HCT116 (cell line): ENCODE measurements at regions of chr9 and their contacts with region 1.

Region 1: DNA sequence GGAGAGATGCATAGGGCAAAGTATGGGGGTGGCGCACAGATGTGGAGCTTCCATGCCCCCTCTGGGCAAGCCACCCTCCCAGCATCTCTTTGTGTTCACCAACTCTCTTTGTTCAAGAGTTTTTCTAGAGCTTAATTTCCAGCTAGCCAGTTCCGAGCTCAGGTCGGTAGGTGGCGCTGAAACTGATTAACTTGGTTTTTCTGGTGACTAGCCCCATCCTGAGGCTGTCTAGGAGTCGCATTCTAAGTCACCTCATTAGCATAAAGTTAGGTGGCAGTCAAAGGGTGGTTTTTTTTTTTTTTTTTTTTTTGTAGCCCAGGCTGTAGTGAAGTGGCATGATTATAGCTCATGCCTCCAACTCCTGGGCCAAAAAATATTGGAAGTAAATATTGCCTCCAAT is 476.4 kb downstream of the KDM4C start:
- DNase-seq: peak; percentile 41
- ATAC-seq: peak; percentile 95
- H3K4me3 ChIP-seq: no peak overlapping the region
- H3K27ac ChIP-seq: no peak overlapping the region
- H3K4me1 ChIP-seq: no peaks in the 10 kb centered on the region
- H3K27me3 ChIP-seq: peaks cover 14% of the 10 kb centered on the region; the same call in 1 of the 2 replicates
- CTCF ChIP-seq: peak; percentile 77 to 97 (median 78)
- POLR2A ChIP-seq: no peak
- RAD21 ChIP-seq: peak; percentile 54

Region 2: GRCh38 chr9:6833518-6834192 is 400.5 kb before region 1 on chr9:
- CTCF ChIA-PET with region 1: no interaction called
- POLR2A ChIA-PET with region 1: no interaction called
- RAD21 ChIA-PET with region 1: no interaction called
- intact Hi-C with region 1: loop called (anchors 10 kb)
- DNase-seq: no peak
- ATAC-seq: no peak
- H3K4me3 ChIP-seq: no peak overlapping the region
- H3K27ac ChIP-seq: no peak overlapping the region
- H3K4me1 ChIP-seq: no peaks in the 10 kb centered on the region
- H3K27me3 ChIP-seq: no peaks in the 10 kb centered on the region
- CTCF ChIP-seq: no peak
- POLR2A ChIP-seq: no peak
- RAD21 ChIP-seq: no peak

Region 3: GRCh38 chr9:7094052-7094451 is 140.1 kb before region 1 on chr9:
- CTCF ChIA-PET with region 1: no interaction called
- POLR2A ChIA-PET with region 1: no interaction called
- RAD21 ChIA-PET with region 1: no interaction called
- intact Hi-C with region 1: loop called (anchors 10 kb)
- DNase-seq: no peak
- ATAC-seq: peak; percentile 75
- H3K4me3 ChIP-seq: no peak overlapping the region
- H3K27ac ChIP-seq: no peak overlapping the region
- H3K4me1 ChIP-seq: peaks cover 0 to 5% of the 10 kb centered on the region in 2 experiments; a peak in 1 of 4 replicates
- H3K27me3 ChIP-seq: no peaks in the 10 kb centered on the region
- CTCF ChIP-seq: peak in 2 of 3 experiments; percentile 32 to 40; a peak in 4 of 6 replicates
- POLR2A ChIP-seq: no peak
- RAD21 ChIP-seq: peak; percentile 36; the same call in 1 of the 2 replicates

Region 4: DNA sequence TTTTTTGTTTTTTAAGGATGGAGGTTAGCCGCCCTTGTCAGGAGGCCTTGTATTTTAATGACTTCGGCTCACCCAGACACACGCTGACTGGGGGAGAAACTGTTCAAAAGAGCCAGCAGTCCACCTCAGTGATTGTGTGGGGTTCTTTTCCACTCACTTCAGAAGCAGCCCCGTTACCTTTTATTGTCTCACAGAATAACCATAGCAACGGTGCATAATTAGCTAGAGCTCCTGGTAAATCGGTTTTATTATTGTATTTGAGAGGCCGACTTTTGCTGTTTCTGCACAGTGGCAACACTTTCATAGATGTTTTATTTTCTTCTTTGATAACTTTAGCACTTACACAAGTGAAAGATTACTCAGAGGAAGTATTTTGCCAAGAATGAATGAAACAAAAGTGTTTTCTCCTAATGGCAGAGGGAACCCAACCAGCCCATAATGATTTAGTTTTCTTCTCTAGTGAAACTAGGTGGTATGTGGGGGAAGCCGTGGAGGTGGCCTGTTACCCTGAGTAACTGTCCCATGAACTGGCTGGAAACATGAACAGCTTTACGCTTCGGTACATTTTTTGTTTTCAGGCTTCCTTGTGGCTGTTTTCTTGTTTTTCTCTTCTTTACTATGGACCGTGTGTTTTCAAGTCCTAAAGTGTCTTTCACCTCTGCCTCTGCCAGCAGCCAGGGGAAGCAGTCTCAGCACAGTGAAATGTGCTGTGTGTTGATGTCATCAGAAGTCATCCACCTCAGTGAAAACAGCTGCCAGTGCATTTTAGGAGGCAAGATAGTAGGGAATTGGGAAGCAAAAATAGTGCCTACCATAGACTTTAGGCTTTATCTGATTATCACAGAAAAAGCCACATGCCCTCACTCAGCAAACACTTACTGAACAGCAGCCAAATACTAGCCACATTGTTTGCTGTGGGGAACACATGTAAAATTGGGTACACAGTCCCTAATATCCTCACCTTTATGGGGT is 61.7 kb before region 1 on chr9:
- CTCF ChIA-PET with region 1: no interaction called
- POLR2A ChIA-PET with region 1: no interaction called
- RAD21 ChIA-PET with region 1: no interaction called
- intact Hi-C with region 1: loop called (anchors 10 kb)
- DNase-seq: no peak
- ATAC-seq: no peak
- H3K4me3 ChIP-seq: no peak overlapping the region
- H3K27ac ChIP-seq: no peak overlapping the region
- H3K4me1 ChIP-seq: no peaks in the 10 kb centered on the region
- H3K27me3 ChIP-seq: no peaks in the 10 kb centered on the region
- CTCF ChIP-seq: no peak
- POLR2A ChIP-seq: no peak
- RAD21 ChIP-seq: no peak

Region 5: DNA sequence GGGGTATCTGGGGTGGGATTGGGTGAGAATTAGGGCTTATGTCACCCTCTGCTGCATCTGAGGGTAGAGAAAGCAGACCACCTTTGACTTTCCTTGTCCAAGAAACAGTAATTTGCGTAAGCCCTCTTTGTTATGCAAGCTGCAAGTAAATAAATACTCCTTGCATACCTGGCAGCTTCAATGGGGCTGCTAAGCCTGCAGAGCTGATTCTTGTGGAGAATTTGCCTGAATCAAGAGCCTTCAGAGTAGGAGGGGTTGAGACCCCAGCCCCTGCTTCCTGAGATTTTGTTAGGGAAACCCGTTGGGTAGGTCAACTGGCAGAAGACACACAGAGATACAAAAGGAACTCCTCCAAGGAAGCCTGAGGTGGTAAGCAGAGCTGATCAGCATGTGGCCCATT is 50.4 kb after region 1 on chr9:
- CTCF ChIA-PET with region 1: no interaction called
- POLR2A ChIA-PET with region 1: no interaction called
- RAD21 ChIA-PET with region 1: no interaction called
- intact Hi-C with region 1: no loop called
- DNase-seq: no peak
- ATAC-seq: no peak
- H3K4me3 ChIP-seq: no peak overlapping the region
- H3K27ac ChIP-seq: no peak overlapping the region
- H3K4me1 ChIP-seq: no peaks in the 10 kb centered on the region
- H3K27me3 ChIP-seq: peaks cover 25% of the 10 kb centered on the region
- CTCF ChIP-seq: no peak
- POLR2A ChIP-seq: no peak
- RAD21 ChIP-seq: no peak